ENCODE measurements at regions of chr3 and their contacts with region 1.

Region 1: DNA sequence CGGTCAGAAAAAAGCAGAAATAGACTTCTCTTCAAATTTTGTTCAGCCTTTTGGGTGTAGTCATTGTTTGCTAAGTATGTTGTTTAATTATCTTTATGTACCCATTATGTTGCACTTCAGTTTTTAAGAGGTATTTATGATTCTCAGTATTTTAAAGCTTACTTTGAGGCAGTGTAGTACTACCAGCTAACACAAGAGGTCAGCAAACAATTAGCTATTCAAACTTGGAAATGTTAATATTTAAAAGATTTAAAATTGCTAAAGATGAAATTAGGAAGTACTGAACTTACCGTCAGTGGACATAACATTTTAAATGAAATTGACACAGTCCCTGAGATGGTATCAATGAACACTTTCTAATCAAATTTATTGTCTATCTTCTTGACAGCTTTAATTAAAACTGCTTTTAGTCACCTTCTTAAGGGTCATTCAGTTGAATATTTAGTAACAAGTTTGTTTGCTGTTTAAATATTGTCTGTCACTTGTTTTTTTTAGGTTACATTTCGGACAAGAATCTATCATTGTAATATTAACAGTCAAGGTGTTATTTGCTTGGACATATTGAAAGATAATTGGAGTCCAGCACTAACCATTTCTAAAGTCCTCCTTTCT is 28.1 kb downstream of the NKIRAS1 start:
- DNase-seq: peak in 5 of 9 donors; percentile 24 to 47 (median 27)
- ATAC-seq: peak; percentile 76
- H3K4me3 ChIP-seq: no peak overlapping the region
- H3K4me3 Mint-ChIP-seq: no peak overlapping the region
- H3K27ac ChIP-seq: no peak overlapping the region
- H3K27ac Mint-ChIP-seq: peak overlapping the region in 4 of 9 donors; percentile 2 to 82 (median 36)
- H3K4me1 ChIP-seq: no peaks in the 10 kb centered on the region
- H3K4me1 Mint-ChIP-seq: peaks cover 0 to 4% (median 0%) of the 10 kb centered on the region in 7 donors
- H3K27me3 ChIP-seq: no peaks in the 10 kb centered on the region
- H3K27me3 Mint-ChIP-seq: no peaks in the 10 kb centered on the region

Region 2: DNA sequence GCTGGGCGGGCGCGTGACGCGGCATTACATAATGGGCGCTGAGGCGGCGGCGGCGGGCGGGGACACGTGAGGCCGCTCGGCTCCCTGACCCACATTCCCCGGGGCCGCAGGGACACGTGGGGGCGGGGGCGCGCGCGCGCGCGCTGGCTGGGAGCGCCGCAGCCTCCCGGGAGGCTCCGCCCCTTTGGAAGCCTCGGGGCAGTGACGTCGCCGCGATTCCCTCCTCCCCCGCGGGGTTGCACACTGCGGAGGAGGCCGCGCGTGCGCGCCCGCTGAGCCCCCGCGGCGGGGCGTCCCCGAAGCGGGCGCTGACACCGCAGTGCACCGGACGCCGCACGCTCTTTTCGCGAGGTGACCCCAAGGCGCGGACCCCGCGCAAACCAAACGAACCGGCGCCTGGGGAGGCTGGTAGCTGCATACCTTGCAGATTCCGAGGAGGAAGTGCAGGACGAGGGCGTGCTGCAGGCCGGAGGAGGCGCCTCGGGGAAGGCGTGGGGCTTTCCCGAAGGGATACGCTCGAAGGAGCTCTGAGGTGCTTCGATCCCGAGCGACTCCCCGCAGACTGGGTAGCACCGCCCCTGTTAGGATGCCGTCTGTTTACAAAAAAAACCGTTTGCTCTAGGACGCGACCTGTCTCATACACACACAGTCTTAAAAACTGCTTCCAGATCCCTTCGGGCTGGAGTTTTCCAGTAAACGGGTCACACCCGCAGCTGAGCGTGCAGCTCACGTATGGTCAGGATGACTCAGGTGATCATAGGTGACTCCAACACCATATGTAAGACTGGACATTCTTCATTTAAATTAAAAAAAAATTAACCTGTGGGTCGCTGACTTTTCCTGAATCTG is 57.4 kb after region 1 on chr3:
- CTCF ChIA-PET with region 1: no interaction called
- POLR2A ChIA-PET with region 1: no interaction called
- intact Hi-C with region 1: loop called in 1 of 2 experiments (anchors 1 kb)
- DNase-seq: peak; percentile 93 to 98 (median 97)
- ATAC-seq: peak; percentile 89
- H3K4me3 ChIP-seq: peak overlapping the region; percentile 79
- H3K4me3 Mint-ChIP-seq: peak overlapping the region; percentile 70 to 90 (median 87)
- H3K27ac ChIP-seq: peak overlapping the region; percentile 81
- H3K27ac Mint-ChIP-seq: peak overlapping the region; percentile 53 to 95 (median 90)
- H3K4me1 ChIP-seq: peaks cover 28 to 31% of the 10 kb centered on the region in 2 donors
- H3K4me1 Mint-ChIP-seq: peaks cover 30 to 61% (median 48%) of the 10 kb centered on the region in 7 donors
- H3K27me3 ChIP-seq: no peaks in the 10 kb centered on the region
- H3K27me3 Mint-ChIP-seq: peaks cover 0 to 41% (median 0%) of the 10 kb centered on the region in 5 donors

Region 3: DNA sequence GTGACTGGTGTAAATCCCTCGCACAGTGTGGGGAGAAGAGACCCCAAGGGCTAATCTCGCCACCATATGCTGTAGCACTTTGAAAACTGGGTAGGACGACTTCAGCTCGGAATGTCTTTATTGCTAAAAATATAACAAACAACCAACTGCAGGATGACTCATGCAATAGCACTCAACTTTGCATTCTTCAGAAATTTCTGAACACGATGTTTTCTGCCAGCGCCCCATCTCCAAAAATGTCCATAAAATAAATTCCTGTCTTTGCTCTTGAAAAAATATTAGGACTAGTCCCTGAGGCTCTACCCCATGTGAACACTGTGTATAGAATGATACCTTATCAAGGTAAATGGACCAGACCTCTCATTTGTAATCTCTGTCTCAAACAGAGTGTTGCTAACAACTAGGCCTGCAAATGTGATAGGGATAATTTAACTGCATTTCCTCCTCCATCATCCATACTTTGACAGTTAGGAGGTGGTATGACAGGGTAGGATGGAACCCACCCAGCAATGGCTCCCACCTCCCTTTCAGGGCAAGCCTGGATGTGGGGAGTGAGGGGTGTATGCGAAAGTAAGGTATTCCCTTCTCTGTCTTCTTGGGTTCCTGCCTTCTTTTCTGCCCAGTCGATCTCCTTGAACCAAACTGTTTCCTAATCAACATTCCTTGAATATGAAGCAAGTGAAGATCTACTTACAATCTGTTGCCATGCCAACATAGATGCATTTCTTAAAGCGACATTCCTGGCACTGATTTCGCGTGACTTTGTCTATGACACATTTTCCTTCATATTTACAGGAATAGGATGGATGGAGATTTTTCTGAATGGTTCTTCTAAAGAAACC is 257.5 kb after region 1 on chr3:
- CTCF ChIA-PET with region 1: no interaction called
- POLR2A ChIA-PET with region 1: no interaction called
- intact Hi-C with region 1: loop called in 1 of 2 experiments (anchors 10 kb)
- DNase-seq: no peak
- ATAC-seq: no peak
- H3K4me3 ChIP-seq: no peak overlapping the region
- H3K4me3 Mint-ChIP-seq: no peak overlapping the region
- H3K27ac ChIP-seq: no peak overlapping the region
- H3K27ac Mint-ChIP-seq: no peak overlapping the region
- H3K4me1 ChIP-seq: no peaks in the 10 kb centered on the region
- H3K4me1 Mint-ChIP-seq: no peaks in the 10 kb centered on the region
- H3K27me3 ChIP-seq: no peaks in the 10 kb centered on the region
- H3K27me3 Mint-ChIP-seq: peaks cover 0 to 5% (median 0%) of the 10 kb centered on the region in 5 donors

Region 4: GRCh38 chr3:24237971-24238767 is 349.4 kb after region 1 on chr3:
- CTCF ChIA-PET with region 1: interaction called, 6 read pairs
- POLR2A ChIA-PET with region 1: no interaction called
- intact Hi-C with region 1: loop called (anchors 1 to 2 kb)
- DNase-seq: peak in 5 of 9 donors; percentile 8 to 46 (median 33)
- ATAC-seq: peak; percentile 75
- H3K4me3 ChIP-seq: no peak overlapping the region
- H3K4me3 Mint-ChIP-seq: no peak overlapping the region
- H3K27ac ChIP-seq: no peak overlapping the region
- H3K27ac Mint-ChIP-seq: no peak overlapping the region
- H3K4me1 ChIP-seq: no peaks in the 10 kb centered on the region
- H3K4me1 Mint-ChIP-seq: no peaks in the 10 kb centered on the region
- H3K27me3 ChIP-seq: no peaks in the 10 kb centered on the region
- H3K27me3 Mint-ChIP-seq: peaks cover 0 to 9% (median 4%) of the 10 kb centered on the region in 5 donors

Region 5: GRCh38 chr3:25594007-25594502 is 1705.3 kb after region 1 on chr3:
- CTCF ChIA-PET with region 1: no interaction called
- POLR2A ChIA-PET with region 1: no interaction called
- intact Hi-C with region 1: loop called in 1 of 2 experiments (anchors 2 kb)
- DNase-seq: peak in 7 of 9 donors; percentile 16 to 42 (median 25)
- ATAC-seq: peak; percentile 73
- H3K4me3 ChIP-seq: no peak overlapping the region
- H3K4me3 Mint-ChIP-seq: no peak overlapping the region
- H3K27ac ChIP-seq: no peak overlapping the region
- H3K27ac Mint-ChIP-seq: peak overlapping the region in 7 of 9 donors; percentile 3 to 71 (median 40)
- H3K4me1 ChIP-seq: no peaks in the 10 kb centered on the region
- H3K4me1 Mint-ChIP-seq: peaks cover 0 to 9% (median 6%) of the 10 kb centered on the region in 7 donors
- H3K27me3 ChIP-seq: no peaks in the 10 kb centered on the region
- H3K27me3 Mint-ChIP-seq: no peaks in the 10 kb centered on the region